B cell (primary cell): ENCODE measurements at regions of chr19 and their contacts with region 1.

Region 1: DNA sequence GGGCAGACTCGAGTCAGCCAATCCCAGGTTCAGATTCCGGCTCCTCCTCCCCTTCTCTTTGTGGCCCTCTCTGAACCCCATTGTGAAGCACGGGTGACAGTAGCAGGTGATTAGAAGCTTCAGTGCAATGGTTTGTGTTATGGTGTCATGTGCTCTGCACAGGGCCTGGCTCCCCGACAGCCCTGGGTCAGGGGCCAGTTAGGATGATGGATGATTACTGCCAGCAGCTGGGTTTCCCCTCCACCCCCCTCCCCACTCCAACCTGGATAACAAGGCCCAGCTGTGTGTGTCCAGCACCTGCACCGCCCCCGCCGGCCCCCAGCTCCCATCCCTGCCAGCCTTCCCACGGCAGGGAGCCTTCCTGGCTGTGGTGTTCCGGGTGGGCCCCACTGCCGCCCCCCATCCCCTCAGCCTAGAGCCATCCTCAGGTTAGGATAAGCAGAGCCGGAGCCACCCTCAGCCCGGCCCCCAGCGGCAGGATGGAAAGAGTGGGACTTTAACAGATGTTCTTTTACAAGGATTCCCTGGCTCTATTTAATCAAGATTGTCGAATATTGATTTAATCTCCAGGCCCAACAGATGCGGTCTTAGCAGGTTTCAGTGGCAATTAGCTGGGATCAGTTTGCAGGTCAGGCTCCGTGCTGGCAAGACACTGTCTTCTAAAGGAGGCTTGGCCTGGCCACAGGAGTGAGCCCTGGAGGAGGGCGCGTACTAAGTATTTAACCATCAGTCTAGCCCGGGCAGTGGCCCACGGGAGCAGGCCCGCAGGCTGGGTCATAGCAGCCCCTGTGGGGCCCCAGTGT is 156.2 kb downstream of the SIPA1L3 start:
- DNase-seq: no peak
- ATAC-seq: no peak
- H3K4me3 ChIP-seq: no peak overlapping the region
- H3K4me3 Mint-ChIP-seq: no peak overlapping the region
- H3K27ac ChIP-seq: peak overlapping the region in 1 of 2 donors; percentile 39
- H3K27ac Mint-ChIP-seq: peak overlapping the region; percentile 71
- H3K4me1 ChIP-seq: peaks cover 23 to 46% of the 10 kb centered on the region in 2 donors
- H3K4me1 Mint-ChIP-seq: peaks cover 46% of the 10 kb centered on the region
- H3K27me3 ChIP-seq: no peaks in the 10 kb centered on the region
- H3K27me3 Mint-ChIP-seq: no peaks in the 10 kb centered on the region
- CTCF ChIP-seq: no peak

Region 2: GRCh38 chr19:38134540-38135149 is 71.5 kb after region 1 on chr19:
- CTCF ChIA-PET with region 1: no interaction called
- POLR2A ChIA-PET with region 1: interaction called, 10 read pairs
- intact Hi-C with region 1: no loop called
- DNase-seq: peak; percentile 64
- ATAC-seq: no peak
- H3K4me3 ChIP-seq: no peak overlapping the region
- H3K4me3 Mint-ChIP-seq: no peak overlapping the region
- H3K27ac ChIP-seq: no peak overlapping the region
- H3K27ac Mint-ChIP-seq: peak overlapping the region; percentile 41
- H3K4me1 ChIP-seq: no peaks in the 10 kb centered on the region
- H3K4me1 Mint-ChIP-seq: no peaks in the 10 kb centered on the region
- H3K27me3 ChIP-seq: no peaks in the 10 kb centered on the region
- H3K27me3 Mint-ChIP-seq: no peaks in the 10 kb centered on the region
- CTCF ChIP-seq: peak; percentile 75